ENCODE measurements at regions of chr5 and their contacts with region 1.

Region 1: DNA sequence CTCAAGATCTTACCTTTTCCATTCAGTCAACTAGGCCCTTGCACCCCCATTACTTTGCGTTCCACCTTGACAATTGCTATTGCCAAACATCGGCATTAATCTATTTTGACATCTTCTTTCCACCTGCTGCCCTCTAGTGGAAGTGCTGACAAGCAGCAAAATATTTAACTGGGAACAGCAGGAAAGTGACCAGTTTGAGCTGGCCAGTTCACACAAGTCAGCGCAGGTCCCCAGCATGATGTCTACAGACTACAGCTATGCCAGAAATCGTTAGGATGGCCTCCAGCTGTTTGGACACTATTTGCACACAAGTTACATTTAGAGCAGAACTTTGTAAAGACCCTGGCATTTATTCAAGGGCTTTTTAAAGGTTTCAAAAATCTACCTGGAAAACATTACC is 160.1 kb downstream of the GHR start:
- DNase-seq: peak; percentile 77
- ATAC-seq: peak; percentile 70
- H3K4me3 ChIP-seq: no peak overlapping the region
- H3K27ac ChIP-seq: no peak overlapping the region
- H3K4me1 ChIP-seq: no peaks in the 10 kb centered on the region; the same call in 1 of the 2 replicates
- H3K27me3 ChIP-seq: no peaks in the 10 kb centered on the region
- CTCF ChIP-seq: peak; percentile 97

Region 2: GRCh38 chr5:42228279-42228678 is 355.0 kb before region 1 on chr5:
- CTCF ChIA-PET with region 1: interaction called, 12 read pairs
- POLR2A ChIA-PET with region 1: interaction called, 3 read pairs
- intact Hi-C with region 1: loop called (anchors 2 kb)
- DNase-seq: peak; percentile 69
- ATAC-seq: peak; percentile 98
- H3K4me3 ChIP-seq: no peak overlapping the region
- H3K27ac ChIP-seq: no peak overlapping the region
- H3K4me1 ChIP-seq: peaks cover 5% of the 10 kb centered on the region; the same call in 1 of the 2 replicates
- H3K27me3 ChIP-seq: no peaks in the 10 kb centered on the region
- CTCF ChIP-seq: peak; percentile 78

Region 3: DNA sequence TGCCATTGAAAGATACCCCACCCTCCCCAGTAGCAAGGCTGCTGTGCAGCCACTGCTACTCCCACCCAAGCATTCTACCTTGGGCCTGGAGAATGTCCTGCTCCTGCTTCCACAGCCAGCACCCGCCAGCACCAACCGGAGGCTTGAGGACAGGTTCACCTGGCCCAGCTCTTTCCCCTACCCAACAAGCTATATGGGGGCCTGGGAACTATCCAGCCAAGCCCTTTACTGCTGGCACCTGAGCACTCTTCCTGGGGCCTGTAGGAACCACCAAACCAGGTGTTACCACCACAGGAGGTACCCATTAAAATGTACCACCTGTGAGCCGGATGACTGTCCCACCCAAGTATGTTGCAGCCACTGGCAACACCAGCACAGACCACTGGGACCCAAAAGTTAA is 246.2 kb before region 1 on chr5:
- CTCF ChIA-PET with region 1: no interaction called
- POLR2A ChIA-PET with region 1: no interaction called
- intact Hi-C with region 1: no loop called
- DNase-seq: no peak
- ATAC-seq: no peak
- H3K4me3 ChIP-seq: no peak overlapping the region
- H3K27ac ChIP-seq: no peak overlapping the region
- H3K4me1 ChIP-seq: no peaks in the 10 kb centered on the region
- H3K27me3 ChIP-seq: no peaks in the 10 kb centered on the region
- CTCF ChIP-seq: no peak

Region 4: GRCh38 chr5:42454216-42454995 is 128.9 kb before region 1 on chr5:
- CTCF ChIA-PET with region 1: no interaction called
- POLR2A ChIA-PET with region 1: no interaction called
- intact Hi-C with region 1: no loop called
- DNase-seq: peak; percentile 75
- ATAC-seq: peak; percentile 68
- H3K4me3 ChIP-seq: no peak overlapping the region
- H3K27ac ChIP-seq: no peak overlapping the region
- H3K4me1 ChIP-seq: peaks cover 10% of the 10 kb centered on the region
- H3K27me3 ChIP-seq: no peaks in the 10 kb centered on the region
- CTCF ChIP-seq: no peak

Region 5: DNA sequence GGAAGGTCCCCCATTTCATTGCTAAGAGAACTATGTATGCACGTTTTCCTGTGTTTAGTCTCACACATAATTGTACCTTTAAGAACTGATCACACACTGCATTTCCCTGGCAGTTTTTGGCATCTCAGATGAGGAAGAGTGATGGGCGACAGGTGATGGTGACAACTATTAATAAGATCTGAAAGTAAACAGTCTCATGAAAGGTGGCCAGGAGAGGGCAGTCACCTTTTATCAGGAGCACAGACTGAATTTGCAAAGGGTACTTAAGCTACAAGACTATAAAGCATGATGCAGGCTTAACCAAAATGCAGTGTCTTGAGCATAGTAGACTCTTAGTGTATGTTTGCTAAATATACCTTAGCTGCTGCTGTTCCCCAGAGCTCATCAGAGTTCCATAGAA is 68.6 kb before region 1 on chr5:
- CTCF ChIA-PET with region 1: interaction called, 5 read pairs
- POLR2A ChIA-PET with region 1: no interaction called
- intact Hi-C with region 1: loop called (anchors 1 kb)
- DNase-seq: peak; percentile 37
- ATAC-seq: peak; percentile 59
- H3K4me3 ChIP-seq: no peak overlapping the region
- H3K27ac ChIP-seq: no peak overlapping the region
- H3K4me1 ChIP-seq: no peaks in the 10 kb centered on the region
- H3K27me3 ChIP-seq: no peaks in the 10 kb centered on the region
- CTCF ChIP-seq: peak; percentile 61

Region 6: GRCh38 chr5:42595597-42595996 is 12.3 kb after region 1 on chr5:
- CTCF ChIA-PET with region 1: no interaction called
- POLR2A ChIA-PET with region 1: no interaction called
- intact Hi-C with region 1: no loop called
- DNase-seq: no peak
- ATAC-seq: no peak; the same call in 1 of the 2 replicates
- H3K4me3 ChIP-seq: no peak overlapping the region
- H3K27ac ChIP-seq: no peak overlapping the region
- H3K4me1 ChIP-seq: no peaks in the 10 kb centered on the region
- H3K27me3 ChIP-seq: no peaks in the 10 kb centered on the region
- CTCF ChIP-seq: no peak

Region 7: DNA sequence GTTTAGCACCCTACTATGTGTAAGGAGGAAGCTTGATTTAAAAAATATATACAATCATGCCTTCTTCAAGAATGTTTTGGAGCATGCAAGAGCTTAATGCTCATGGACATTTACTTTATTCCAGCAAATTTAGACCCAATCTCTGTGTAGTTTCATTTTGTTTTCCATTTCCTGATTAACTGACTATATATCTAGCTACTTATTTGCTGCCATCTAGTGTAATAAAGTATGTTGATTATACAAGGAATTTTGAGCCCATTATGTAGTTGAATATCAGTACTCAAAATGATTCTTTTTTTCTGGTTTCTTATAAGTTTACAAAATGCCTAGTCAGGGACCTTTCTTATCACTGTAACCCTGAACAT is 73.3 kb after region 1 on chr5:
- CTCF ChIA-PET with region 1: interaction called, 4 read pairs
- POLR2A ChIA-PET with region 1: no interaction called
- intact Hi-C with region 1: loop called (anchors 5 kb)
- DNase-seq: peak; percentile 58
- ATAC-seq: peak; percentile 80
- H3K4me3 ChIP-seq: peak overlapping the region; percentile 44
- H3K27ac ChIP-seq: no peak overlapping the region
- H3K4me1 ChIP-seq: peaks cover 7% of the 10 kb centered on the region; the same call in 1 of the 2 replicates
- H3K27me3 ChIP-seq: no peaks in the 10 kb centered on the region
- CTCF ChIP-seq: peak; percentile 76

Region 8: DNA sequence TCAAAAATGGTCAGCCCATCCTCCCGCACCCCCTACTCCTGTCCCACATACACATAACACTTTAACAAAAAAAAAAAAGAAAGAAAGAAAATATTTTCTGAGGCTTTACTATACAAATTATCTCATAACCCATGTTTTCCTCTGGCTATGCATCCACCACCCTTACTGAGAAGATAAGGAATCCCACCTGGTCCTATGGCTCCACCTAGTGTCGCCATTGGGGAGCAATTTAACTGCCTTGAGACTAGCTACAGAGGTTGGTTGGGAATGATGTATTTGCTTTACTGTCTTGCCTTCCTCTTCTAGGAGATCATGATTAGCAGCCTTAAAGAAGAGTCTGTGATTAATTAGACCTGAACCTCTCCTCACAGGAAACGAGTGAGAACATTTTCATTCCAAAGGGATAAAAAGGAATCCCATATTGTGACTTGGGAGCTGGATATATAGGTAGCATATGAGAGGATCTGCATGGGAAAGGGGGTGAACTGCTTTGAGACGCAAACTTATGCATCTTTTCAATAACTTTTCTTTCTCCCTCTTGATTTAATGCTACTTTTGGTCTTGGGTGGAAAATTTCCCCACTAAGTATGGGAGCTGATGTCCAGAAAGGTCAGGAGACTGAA is 306.1 kb after region 1 on chr5:
- CTCF ChIA-PET with region 1: interaction called, 3 read pairs
- POLR2A ChIA-PET with region 1: no interaction called
- intact Hi-C with region 1: loop called (anchors 1 kb)
- DNase-seq: peak; percentile 96
- ATAC-seq: peak; percentile 89
- H3K4me3 ChIP-seq: no peak overlapping the region
- H3K27ac ChIP-seq: no peak overlapping the region
- H3K4me1 ChIP-seq: peaks cover 20% of the 10 kb centered on the region
- H3K27me3 ChIP-seq: no peaks in the 10 kb centered on the region
- CTCF ChIP-seq: peak; percentile 97